T-cell (primary cell): ENCODE measurements at regions of chr12 and their contacts with region 1.

Region 1: DNA sequence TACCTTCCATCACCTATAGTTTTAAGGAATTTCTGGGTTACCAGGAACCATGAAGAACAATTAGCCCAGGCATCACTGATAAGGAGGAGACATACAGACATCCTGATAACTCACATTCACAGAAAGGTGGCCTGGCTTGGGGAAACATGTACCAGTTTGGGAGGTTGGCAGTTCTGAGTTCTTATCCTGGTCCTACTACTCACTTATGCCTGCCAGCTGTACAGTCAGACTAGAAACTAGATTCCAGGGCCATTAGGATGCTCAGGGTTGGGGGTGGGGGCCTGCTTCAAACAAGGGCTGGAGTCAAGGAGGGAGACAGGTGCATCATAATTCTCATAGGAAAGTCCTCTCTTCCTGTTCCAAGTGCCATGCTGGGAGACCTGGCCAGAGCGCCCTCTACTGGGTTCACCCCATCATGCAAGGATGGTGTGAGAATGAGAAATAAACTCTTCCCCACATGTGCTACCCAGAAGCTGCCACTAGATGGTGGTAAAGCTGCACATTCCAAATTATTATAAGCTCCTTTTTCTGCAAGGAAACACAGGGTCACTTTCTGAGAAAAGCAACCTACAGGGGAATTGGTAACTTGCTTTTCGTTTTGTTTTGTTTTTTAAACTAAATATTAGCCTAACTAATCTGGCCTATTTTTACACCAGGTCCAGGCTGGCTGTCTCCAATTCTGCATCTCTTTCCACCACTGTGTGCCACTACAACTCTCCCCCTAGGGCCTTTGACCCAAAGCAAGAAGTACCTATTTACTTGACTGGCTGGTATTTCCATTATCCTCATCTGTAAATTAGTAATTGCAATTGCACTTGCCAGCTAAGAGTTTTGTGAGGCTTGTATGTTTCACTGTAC is 14.5 kb downstream of the OAS2 start:
- DNase-seq: peak in 31 of 35 experiments; percentile 8 to 72 (median 37)
- ATAC-seq: peak; percentile 55 to 73 (median 64)
- H3K4me3 ChIP-seq: no peak overlapping the region
- H3K4me3 Mint-ChIP-seq: no peak overlapping the region
- H3K27ac ChIP-seq: peak overlapping the region; percentile 26
- H3K27ac Mint-ChIP-seq: peak overlapping the region in 1 of 2 donors; percentile 28
- H3K4me1 ChIP-seq: no peaks in the 10 kb centered on the region
- H3K4me1 Mint-ChIP-seq: peaks cover 21 to 30% (median 22%) of the 10 kb centered on the region in 3 donors
- H3K27me3 ChIP-seq: no peaks in the 10 kb centered on the region
- H3K27me3 Mint-ChIP-seq: no peaks in the 10 kb centered on the region

Region 2: DNA sequence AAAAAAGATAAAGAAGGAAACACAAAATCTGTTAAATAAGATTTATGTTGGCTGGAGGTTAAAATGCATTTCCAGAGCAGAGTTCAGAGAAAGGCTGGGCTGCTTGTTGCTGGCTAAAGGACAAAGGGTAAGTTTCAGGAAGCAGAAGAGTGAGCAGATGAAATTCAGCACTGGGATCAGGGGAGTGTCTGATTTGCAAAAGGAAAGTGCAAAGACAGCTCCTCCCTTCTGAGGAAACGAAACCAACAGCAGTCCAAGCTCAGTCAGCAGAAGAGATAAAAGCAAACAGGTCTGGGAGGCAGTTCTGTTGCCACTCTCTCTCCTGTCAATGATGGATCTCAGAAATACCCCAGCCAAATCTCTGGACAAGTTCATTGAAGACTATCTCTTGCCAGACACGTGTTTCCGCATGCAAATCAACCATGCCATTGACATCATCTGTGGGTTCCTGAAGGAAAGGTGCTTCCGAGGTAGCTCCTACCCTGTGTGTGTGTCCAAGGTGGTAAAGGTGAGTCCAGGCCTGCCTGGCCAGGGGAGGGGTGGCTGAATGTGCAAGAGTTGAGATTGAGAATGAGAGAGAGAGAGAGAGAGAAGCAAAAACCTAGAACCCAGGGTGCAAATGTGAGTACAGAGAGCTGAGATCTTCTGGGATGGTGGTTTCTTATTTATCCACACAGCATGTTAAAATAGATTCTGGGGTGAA is 85.9 kb before region 1 on chr12 and contains the start of gene OAS1:
- CTCF ChIA-PET with region 1: interaction called in 1 of 2 experiments, 13 read pairs
- POLR2A ChIA-PET with region 1: no interaction called
- DNase-seq: peak in 18 of 35 experiments; percentile 6 to 63 (median 16)
- ATAC-seq: peak; percentile 71 to 82 (median 76)
- H3K4me3 ChIP-seq: peak within 1 kb of the TSS; percentile 60 to 78
- H3K4me3 Mint-ChIP-seq: peak within 1 kb of the TSS; percentile 86 to 92 (median 88)
- H3K27ac ChIP-seq: peak within 1 kb of the TSS; percentile 67
- H3K27ac Mint-ChIP-seq: peak within 1 kb of the TSS; percentile 95
- H3K4me1 ChIP-seq: peaks cover 35 to 59% of the 10 kb centered on the region in 2 experiments
- H3K4me1 Mint-ChIP-seq: peaks cover 72 to 91% (median 80%) of the 10 kb centered on the region in 3 donors
- H3K27me3 ChIP-seq: no peaks in the 10 kb centered on the region
- H3K27me3 Mint-ChIP-seq: no peaks in the 10 kb centered on the region
- total RNA-seq, gene OAS1: 8.5 to 22.9 (median 11.4) TPM

Region 3: DNA sequence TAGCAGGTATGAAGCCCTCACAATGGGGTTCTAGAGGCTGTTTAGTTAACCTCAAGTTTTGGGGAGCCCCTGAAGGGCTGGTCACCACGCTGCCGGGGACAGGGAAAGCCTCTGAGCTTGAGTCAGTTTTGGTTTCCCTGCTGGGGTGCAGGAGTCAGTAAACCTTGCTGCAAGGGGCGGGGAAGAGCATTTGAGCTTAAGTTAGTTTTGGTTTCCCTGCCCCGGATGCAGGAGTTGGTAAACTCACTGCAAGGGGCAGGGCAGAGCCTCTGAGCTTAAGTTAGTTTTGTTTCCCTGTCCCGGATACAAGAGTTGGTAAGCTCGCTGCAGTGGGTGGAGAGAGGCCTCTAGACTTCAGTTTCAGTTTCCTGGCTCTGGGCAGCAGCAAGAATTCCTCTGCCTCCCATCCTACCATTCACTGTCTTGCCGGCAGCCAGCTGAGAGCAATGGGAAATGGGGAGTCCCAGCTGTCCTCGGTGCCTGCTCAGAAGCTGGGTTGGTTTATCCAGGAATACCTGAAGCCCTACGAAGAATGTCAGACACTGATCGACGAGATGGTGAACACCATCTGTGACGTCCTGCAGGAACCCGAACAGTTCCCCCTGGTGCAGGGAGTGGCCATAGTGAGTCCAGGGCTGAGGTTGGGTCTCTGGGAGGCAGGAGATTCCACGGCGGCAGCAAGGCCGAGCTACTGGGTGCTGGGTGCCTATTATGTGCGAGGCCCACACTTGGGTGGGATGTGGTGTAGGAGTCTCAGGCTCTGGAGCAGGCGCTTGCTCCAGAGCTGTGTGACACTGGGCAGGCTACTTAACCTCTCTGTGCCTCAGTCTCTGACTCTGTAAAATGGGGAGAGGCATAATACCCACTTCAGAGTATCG is 14.4 kb before region 1 on chr12 and contains the start of gene OAS2:
- CTCF ChIA-PET with region 1: interaction called, 11 to 68 read pairs
- POLR2A ChIA-PET with region 1: interaction called, 4 to 5 read pairs
- DNase-seq: peak; percentile 59 to 91 (median 79)
- ATAC-seq: peak; percentile 93 to 96 (median 94)
- H3K4me3 ChIP-seq: peak within 1 kb of the TSS; percentile 94 to 97
- H3K4me3 Mint-ChIP-seq: peak within 1 kb of the TSS; percentile 96 to 99 (median 99)
- H3K27ac ChIP-seq: peak within 1 kb of the TSS; percentile 95
- H3K27ac Mint-ChIP-seq: peak within 1 kb of the TSS; percentile 99
- H3K4me1 ChIP-seq: peaks cover 21% of the 10 kb centered on the region in 2 experiments
- H3K4me1 Mint-ChIP-seq: peaks cover 48 to 59% (median 55%) of the 10 kb centered on the region in 3 donors
- H3K27me3 ChIP-seq: no peaks in the 10 kb centered on the region
- H3K27me3 Mint-ChIP-seq: no peaks in the 10 kb centered on the region
- total RNA-seq, gene OAS2: 44.8 to 75.5 (median 56.9) TPM

Region 4: DNA sequence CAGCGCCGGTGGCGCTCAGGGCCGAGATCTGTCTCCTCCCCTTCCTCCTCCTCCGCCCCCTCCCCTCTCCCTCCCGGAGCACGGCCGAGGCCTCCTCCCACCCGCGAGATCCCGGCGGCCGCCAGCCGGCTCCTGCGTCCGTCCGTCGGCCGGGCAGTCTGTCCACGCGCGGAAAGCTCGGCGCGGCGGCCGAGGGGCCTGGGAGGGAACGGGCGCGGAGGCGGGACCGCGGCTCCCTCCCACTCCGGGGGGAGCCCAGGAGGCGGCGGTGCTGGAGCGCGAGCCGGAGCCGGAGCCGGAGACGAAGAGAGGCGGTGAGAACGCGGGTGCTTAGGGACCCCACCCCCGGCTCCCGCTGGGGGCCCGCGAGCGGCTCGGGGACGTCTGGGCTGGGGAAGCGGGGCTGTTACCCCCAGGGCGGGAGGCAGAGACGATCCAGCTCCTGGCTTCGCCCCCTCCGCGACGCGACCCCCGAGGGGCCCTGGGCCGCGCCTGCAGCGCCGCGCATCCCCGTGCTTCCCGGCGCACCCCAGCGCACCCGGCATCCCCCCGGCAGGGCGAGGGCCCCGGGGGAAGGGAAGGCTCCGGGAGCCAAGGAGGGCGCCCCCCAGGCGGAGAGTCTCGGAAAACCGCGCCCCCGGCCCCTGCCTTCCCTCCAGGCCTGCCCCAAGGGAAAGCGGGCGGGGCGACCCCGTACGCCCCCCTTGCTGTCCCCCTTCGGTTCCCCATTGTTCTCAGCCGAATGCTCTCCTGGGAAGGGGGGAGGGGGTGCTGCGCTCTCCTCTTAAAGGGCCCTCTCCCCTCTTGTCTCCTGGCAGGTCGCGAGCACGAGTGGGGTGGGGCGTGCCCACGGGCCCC is 64.1 kb after region 1 on chr12 and contains the start of gene DTX1:
- CTCF ChIA-PET with region 1: no interaction called
- POLR2A ChIA-PET with region 1: no interaction called
- DNase-seq: peak in 25 of 35 experiments; percentile 8 to 54 (median 25)
- ATAC-seq: peak; percentile 77 to 83 (median 79)
- H3K4me3 ChIP-seq: peak within 1 kb of the TSS; percentile 51 to 68
- H3K4me3 Mint-ChIP-seq: peak within 1 kb of the TSS; percentile 79 to 83 (median 81)
- H3K27ac ChIP-seq: peak within 1 kb of the TSS; percentile 24
- H3K27ac Mint-ChIP-seq: peak within 1 kb of the TSS; percentile 72 to 74
- H3K4me1 ChIP-seq: peaks cover 3 to 66% of the 10 kb centered on the region in 2 experiments
- H3K4me1 Mint-ChIP-seq: peaks cover 32 to 43% (median 36%) of the 10 kb centered on the region in 3 donors
- H3K27me3 ChIP-seq: peaks cover 0 to 17% of the 10 kb centered on the region in 2 experiments
- H3K27me3 Mint-ChIP-seq: peaks cover 0 to 1% of the 10 kb centered on the region in 2 donors
- total RNA-seq, gene DTX1: 5.6 to 12.0 (median 10.4) TPM

Region 5: DNA sequence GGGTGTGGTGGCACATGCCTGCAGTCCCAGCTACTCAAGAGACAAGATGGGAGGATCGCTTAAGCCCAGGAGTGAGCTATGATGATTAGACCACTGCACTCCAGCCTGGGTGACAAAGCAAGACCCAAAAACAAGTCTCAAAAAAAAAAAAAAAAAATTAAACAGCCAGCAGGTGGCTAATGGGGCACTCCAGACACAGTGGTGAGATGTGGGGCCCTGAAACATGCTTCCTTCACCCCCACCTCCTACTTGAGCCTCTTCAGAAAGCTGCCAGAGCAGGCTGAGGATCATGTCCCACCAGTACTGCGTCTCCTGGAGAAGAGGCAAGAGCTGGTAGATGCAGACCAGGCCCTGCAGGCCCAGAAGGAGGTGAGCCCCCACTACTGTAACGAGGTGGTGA is 158.9 kb after region 1 on chr12:
- CTCF ChIA-PET with region 1: interaction called, 3 to 5 read pairs
- POLR2A ChIA-PET with region 1: interaction called in 1 of 2 experiments, 12 read pairs
- DNase-seq: no peak
- ATAC-seq: no peak
- H3K4me3 ChIP-seq: no peak overlapping the region
- H3K4me3 Mint-ChIP-seq: peak overlapping the region in 1 of 3 donors; percentile 84
- H3K27ac ChIP-seq: no peak overlapping the region
- H3K27ac Mint-ChIP-seq: no peak overlapping the region
- H3K4me1 ChIP-seq: peaks cover 0 to 30% of the 10 kb centered on the region in 2 experiments
- H3K4me1 Mint-ChIP-seq: peaks cover 17 to 24% (median 19%) of the 10 kb centered on the region in 3 donors
- H3K27me3 ChIP-seq: peaks cover 0 to 42% of the 10 kb centered on the region in 2 experiments
- H3K27me3 Mint-ChIP-seq: peaks cover 0 to 13% of the 10 kb centered on the region in 2 donors

Region 6: GRCh38 chr12:113174461-113175384 is 182.0 kb after region 1 on chr12:
- CTCF ChIA-PET with region 1: interaction called, 6 to 19 read pairs
- POLR2A ChIA-PET with region 1: no interaction called
- DNase-seq: peak in 34 of 35 experiments; percentile 27 to 84 (median 64)
- ATAC-seq: peak; percentile 78 to 87 (median 84)
- H3K4me3 ChIP-seq: no peak overlapping the region
- H3K4me3 Mint-ChIP-seq: no peak overlapping the region
- H3K27ac ChIP-seq: no peak overlapping the region
- H3K27ac Mint-ChIP-seq: no peak overlapping the region
- H3K4me1 ChIP-seq: peaks cover 0 to 7% of the 10 kb centered on the region in 2 experiments
- H3K4me1 Mint-ChIP-seq: peaks cover 3 to 7% (median 5%) of the 10 kb centered on the region in 3 donors
- H3K27me3 ChIP-seq: no peaks in the 10 kb centered on the region
- H3K27me3 Mint-ChIP-seq: no peaks in the 10 kb centered on the region